Activated CD8-positive, alpha-beta T cell treated with anti-CD3 and anti-CD28 coated beads for 36 hours (primary cell): ENCODE measurements at regions of chr6 and their contacts with region 1.

Region 1: GRCh38 chr6:41027799-41028628 is 11.0 kb downstream of the UNC5CL start:
- DNase-seq: peak; percentile 81
- ATAC-seq: peak; percentile 92
- H3K4me3 Mint-ChIP-seq: peak overlapping the region; percentile 71
- H3K27ac Mint-ChIP-seq: peak overlapping the region; percentile 76
- H3K4me1 Mint-ChIP-seq: peaks cover 18% of the 10 kb centered on the region
- H3K27me3 Mint-ChIP-seq: no peaks in the 10 kb centered on the region
- CTCF ChIP-seq: peak; percentile 100

Region 2: DNA sequence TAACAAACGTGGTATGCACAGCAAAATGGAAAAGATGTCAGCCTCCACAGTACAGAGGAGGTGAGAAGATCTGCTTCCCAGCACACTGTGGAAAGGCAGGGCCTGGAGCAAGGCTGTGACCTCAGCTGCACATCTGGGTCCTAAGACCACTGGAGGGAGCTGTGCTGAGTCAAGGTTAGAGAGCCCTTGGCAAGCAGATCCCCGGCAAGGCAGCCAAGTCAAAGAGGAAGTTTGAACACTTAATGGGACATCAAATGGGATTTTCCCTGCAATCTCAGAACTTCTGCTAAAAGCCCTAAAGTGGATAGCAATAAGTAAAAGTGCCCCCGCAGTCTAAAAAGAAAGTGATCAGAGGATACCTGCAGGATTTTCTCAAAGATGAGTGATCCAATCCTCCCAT is 28.4 kb before region 1 on chr6:
- CTCF ChIA-PET with region 1: interaction called, 14 read pairs
- POLR2A ChIA-PET with region 1: interaction called, 3 read pairs
- intact Hi-C with region 1: no loop called
- DNase-seq: peak; percentile 31
- ATAC-seq: peak; percentile 47
- H3K4me3 Mint-ChIP-seq: no peak overlapping the region
- H3K27ac Mint-ChIP-seq: no peak overlapping the region
- H3K4me1 Mint-ChIP-seq: no peaks in the 10 kb centered on the region
- H3K27me3 Mint-ChIP-seq: peaks cover 29% of the 10 kb centered on the region
- CTCF ChIP-seq: no peak

Region 3: DNA sequence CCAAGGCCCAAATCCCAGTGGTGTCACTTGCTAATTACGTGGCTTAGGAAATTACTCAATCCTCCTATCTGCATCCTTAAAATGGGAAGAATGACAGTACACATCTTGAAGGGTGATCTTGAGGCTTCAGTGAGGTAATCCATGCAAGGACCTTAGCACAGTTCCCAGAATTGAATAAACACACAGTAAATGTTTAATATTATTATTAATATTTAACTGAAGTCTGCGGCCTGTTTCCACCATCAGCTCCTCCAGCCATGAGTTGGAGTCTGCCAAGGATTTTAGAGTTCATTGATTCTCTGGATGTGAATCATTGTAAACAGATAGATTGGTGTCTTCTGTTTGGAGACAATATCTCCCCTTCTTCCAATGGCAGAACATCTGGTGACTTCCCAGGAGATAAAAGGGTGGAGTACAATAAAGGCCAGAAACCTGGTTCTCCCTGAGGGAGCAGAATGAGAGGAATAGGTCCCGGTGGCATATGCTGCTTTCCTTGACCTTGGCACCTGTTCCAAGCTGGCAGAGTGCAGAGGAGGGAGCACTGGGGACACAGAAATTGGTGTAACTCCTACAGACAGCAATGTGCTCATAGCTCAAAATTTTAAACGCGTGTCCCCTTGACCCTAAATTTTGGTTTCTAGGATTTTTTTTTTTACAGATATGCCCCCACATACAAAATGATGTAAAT is 14.4 kb before region 1 on chr6:
- CTCF ChIA-PET with region 1: interaction called, 36 read pairs
- POLR2A ChIA-PET with region 1: interaction called, 7 read pairs
- intact Hi-C with region 1: no loop called
- DNase-seq: no peak
- ATAC-seq: no peak
- H3K4me3 Mint-ChIP-seq: no peak overlapping the region
- H3K27ac Mint-ChIP-seq: no peak overlapping the region
- H3K4me1 Mint-ChIP-seq: no peaks in the 10 kb centered on the region
- H3K27me3 Mint-ChIP-seq: no peaks in the 10 kb centered on the region
- CTCF ChIP-seq: no peak

Region 4: GRCh38 chr6:41045664-41046063 is 17.6 kb after region 1 on chr6:
- CTCF ChIA-PET with region 1: interaction called, 48 read pairs
- POLR2A ChIA-PET with region 1: interaction called, 6 read pairs
- intact Hi-C with region 1: no loop called
- DNase-seq: no peak
- ATAC-seq: no peak
- H3K4me3 Mint-ChIP-seq: no peak overlapping the region
- H3K27ac Mint-ChIP-seq: no peak overlapping the region
- H3K4me1 Mint-ChIP-seq: peaks cover 4% of the 10 kb centered on the region
- H3K27me3 Mint-ChIP-seq: no peaks in the 10 kb centered on the region
- CTCF ChIP-seq: no peak

Region 5: DNA sequence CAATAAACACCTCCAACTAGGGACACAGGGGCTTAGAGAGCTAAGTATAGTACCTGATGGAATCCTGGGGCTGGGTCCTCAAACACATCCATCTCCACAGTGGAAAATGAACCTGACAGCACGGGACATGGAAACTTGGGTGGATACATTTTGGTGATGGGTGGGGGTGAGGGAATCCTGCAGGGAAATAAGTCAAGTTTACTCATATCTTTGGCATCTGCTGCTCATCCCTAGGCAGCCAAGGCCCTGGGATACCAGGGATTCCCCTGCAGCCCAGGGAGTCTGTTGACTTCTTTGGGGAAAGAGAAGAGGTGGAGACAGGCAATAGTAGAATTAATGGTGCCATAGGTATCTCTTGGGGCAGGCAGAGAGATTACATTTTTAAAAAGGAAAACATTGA is 31.5 kb after region 1 on chr6:
- CTCF ChIA-PET with region 1: interaction called, 14 read pairs
- POLR2A ChIA-PET with region 1: no interaction called
- intact Hi-C with region 1: no loop called
- DNase-seq: no peak
- ATAC-seq: no peak
- H3K4me3 Mint-ChIP-seq: no peak overlapping the region
- H3K27ac Mint-ChIP-seq: no peak overlapping the region
- H3K4me1 Mint-ChIP-seq: peaks cover 5% of the 10 kb centered on the region
- H3K27me3 Mint-ChIP-seq: no peaks in the 10 kb centered on the region
- CTCF ChIP-seq: no peak